GM12878 (cell line): ENCODE measurements at regions of chr5 and their contacts with region 1.

Region 1: GRCh38 chr5:159003037-159004030 is 96.4 kb downstream of the EBF1 start:
- DNase-seq: no peak
- ATAC-seq: no peak
- H3K4me3 ChIP-seq: no peak overlapping the region
- H3K27ac ChIP-seq: no peak overlapping the region
- H3K4me1 ChIP-seq: peaks cover 5% of the 10 kb centered on the region; the same call in 1 of the 2 replicates
- H3K27me3 ChIP-seq: no peaks in the 10 kb centered on the region
- CTCF ChIP-seq: no peak
- EP300 ChIP-seq: no peak
- POLR2A ChIP-seq: no peak
- RAD21 ChIP-seq: no peak

Region 2: DNA sequence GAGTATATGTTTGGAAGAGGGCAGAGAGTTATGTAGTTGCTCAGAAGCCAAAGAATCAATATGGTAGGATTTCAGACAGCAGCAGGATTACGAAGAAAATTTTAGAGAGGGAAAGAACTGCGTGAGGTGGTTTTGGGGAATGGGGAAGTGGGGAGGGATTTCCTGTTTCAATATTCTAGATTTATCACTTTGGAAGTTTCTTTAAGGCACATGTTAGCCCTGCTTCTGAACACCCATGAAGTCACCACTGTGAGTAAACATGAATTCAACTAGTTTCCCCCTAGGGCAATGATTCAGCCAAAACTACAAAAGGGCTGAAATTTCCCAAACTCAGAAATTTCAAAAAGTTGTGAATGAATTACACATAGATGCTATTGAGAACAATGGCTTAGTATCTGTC is 35.8 kb before region 1 on chr5:
- CTCF ChIA-PET with region 1: interaction called, 6 read pairs
- POLR2A ChIA-PET with region 1: interaction called, 38 read pairs
- RAD21 ChIA-PET with region 1: interaction called, 6 read pairs
- SMC1A ChIA-PET with region 1: interaction called, 81 read pairs
- in situ Hi-C with region 1: no loop called
- intact Hi-C with region 1: no loop called
- DNase-seq: no peak
- ATAC-seq: peak; percentile 74
- H3K4me3 ChIP-seq: no peak overlapping the region
- H3K27ac ChIP-seq: peak overlapping the region; percentile 14; the same call in 1 of the 2 replicates
- H3K4me1 ChIP-seq: peaks cover 6% of the 10 kb centered on the region
- H3K27me3 ChIP-seq: no peaks in the 10 kb centered on the region
- CTCF ChIP-seq: no peak
- EP300 ChIP-seq: peak in 1 of 2 experiments; percentile 23; a peak in 1 of 4 replicates
- POLR2A ChIP-seq: no peak
- RAD21 ChIP-seq: no peak

Region 3: GRCh38 chr5:159017786-159018185 is 14.5 kb after region 1 on chr5:
- CTCF ChIA-PET with region 1: interaction called, 3 read pairs
- POLR2A ChIA-PET with region 1: interaction called, 3 read pairs
- RAD21 ChIA-PET with region 1: interaction called, 6 read pairs
- SMC1A ChIA-PET with region 1: interaction called, 28 read pairs
- in situ Hi-C with region 1: no loop called
- intact Hi-C with region 1: no loop called
- DNase-seq: no peak
- ATAC-seq: peak; percentile 93
- H3K4me3 ChIP-seq: no peak overlapping the region
- H3K27ac ChIP-seq: peak overlapping the region; percentile 22
- H3K4me1 ChIP-seq: peaks cover 5% of the 10 kb centered on the region
- H3K27me3 ChIP-seq: no peaks in the 10 kb centered on the region
- CTCF ChIP-seq: no peak
- EP300 ChIP-seq: no peak
- POLR2A ChIP-seq: no peak
- RAD21 ChIP-seq: no peak

Region 4: GRCh38 chr5:159034083-159034824 is 30.9 kb after region 1 on chr5:
- CTCF ChIA-PET with region 1: interaction called, 4 read pairs
- POLR2A ChIA-PET with region 1: interaction called, 3 read pairs
- RAD21 ChIA-PET with region 1: no interaction called
- SMC1A ChIA-PET with region 1: interaction called, 10 read pairs
- in situ Hi-C with region 1: no loop called
- intact Hi-C with region 1: no loop called
- DNase-seq: no peak
- ATAC-seq: peak; percentile 84
- H3K4me3 ChIP-seq: peak overlapping the region; percentile 33
- H3K27ac ChIP-seq: peak overlapping the region; percentile 61
- H3K4me1 ChIP-seq: peaks cover 37% of the 10 kb centered on the region
- H3K27me3 ChIP-seq: no peaks in the 10 kb centered on the region
- CTCF ChIP-seq: no peak
- EP300 ChIP-seq: no peak
- POLR2A ChIP-seq: no peak
- RAD21 ChIP-seq: no peak

Region 5: GRCh38 chr5:159094745-159095144 is 91.4 kb after region 1 on chr5:
- CTCF ChIA-PET with region 1: no interaction called
- POLR2A ChIA-PET with region 1: interaction called, 4 read pairs
- RAD21 ChIA-PET with region 1: interaction called, 10 read pairs
- SMC1A ChIA-PET with region 1: interaction called, 10 read pairs
- in situ Hi-C with region 1: no loop called
- intact Hi-C with region 1: no loop called
- DNase-seq: no peak
- ATAC-seq: peak; percentile 35
- H3K4me3 ChIP-seq: peak overlapping the region; percentile 88
- H3K27ac ChIP-seq: peak overlapping the region; percentile 68
- H3K4me1 ChIP-seq: peaks cover 5% of the 10 kb centered on the region; the same call in 1 of the 2 replicates
- H3K27me3 ChIP-seq: no peaks in the 10 kb centered on the region
- CTCF ChIP-seq: no peak
- EP300 ChIP-seq: no peak
- POLR2A ChIP-seq: no peak
- RAD21 ChIP-seq: no peak